Activated CD4-positive, alpha-beta T cell treated with anti-CD3 and anti-CD28 coated beads for 36 hours (primary cell): ENCODE measurements at regions of chr5 and their contacts with region 1.

Region 1: GRCh38 chr5:122774861-122775549 is at the start of gene SNX2:
- DNase-seq: peak; percentile 95
- ATAC-seq: peak; percentile 94
- H3K4me3 Mint-ChIP-seq: peak within 1 kb of the TSS; percentile 94
- H3K27ac Mint-ChIP-seq: peak within 1 kb of the TSS; percentile 91
- H3K4me1 Mint-ChIP-seq: peaks cover 30% of the 10 kb centered on the region
- H3K27me3 Mint-ChIP-seq: peaks cover under 1% of the 10 kb centered on the region
- total RNA-seq, gene SNX2: 50.2 to 56.0 TPM

Region 2: GRCh38 chr5:122805481-122805880 is 30.5 kb after region 1 on chr5:
- CTCF ChIA-PET with region 1: no interaction called
- POLR2A ChIA-PET with region 1: no interaction called
- intact Hi-C with region 1: no loop called
- DNase-seq: no peak
- ATAC-seq: no peak
- H3K4me3 Mint-ChIP-seq: no peak overlapping the region
- H3K27ac Mint-ChIP-seq: no peak overlapping the region
- H3K4me1 Mint-ChIP-seq: no peaks in the 10 kb centered on the region
- H3K27me3 Mint-ChIP-seq: no peaks in the 10 kb centered on the region

Region 3: DNA sequence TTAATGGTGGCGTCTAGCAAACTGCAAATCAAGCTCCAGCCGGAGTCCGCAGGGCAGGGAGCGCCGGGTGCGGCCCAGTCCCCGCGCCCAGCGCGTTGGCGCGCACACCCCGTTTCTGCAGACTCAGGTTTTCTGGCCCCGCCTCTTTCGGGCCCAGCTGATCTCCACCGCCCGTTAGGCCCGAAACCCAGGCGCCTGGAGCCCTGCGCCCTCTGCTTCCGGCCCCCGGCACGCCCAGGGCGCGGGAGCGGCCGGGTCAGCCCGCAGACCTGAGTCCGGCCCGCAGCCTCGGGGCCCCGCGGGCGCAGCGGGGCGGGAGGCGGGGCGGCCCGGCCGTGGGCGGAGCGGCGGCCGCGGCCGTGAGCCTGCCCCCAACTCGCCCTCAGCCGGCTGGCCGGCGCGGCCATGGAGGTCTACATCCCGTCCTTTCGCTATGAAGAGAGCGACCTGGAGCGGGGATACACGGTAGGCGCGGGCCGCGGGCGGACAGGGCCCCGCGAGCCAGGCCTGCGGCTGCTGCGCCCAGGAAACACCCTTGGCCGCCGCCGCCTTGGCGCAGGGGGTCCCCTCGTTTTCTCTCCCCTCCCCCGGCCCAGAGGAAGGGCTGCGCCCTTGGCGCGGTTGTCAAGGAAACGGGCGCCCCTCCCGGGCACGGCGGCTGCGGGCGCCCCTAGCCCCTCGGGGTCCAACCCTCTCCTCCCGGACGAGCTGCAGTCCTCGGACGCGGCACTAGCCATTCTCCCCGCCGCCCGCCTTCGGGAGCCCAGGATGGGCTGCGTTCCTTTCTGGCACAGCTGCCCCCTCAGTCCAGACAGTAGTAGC is 70.4 kb after region 1 on chr5 and contains the start of gene SNX24:
- CTCF ChIA-PET with region 1: no interaction called
- POLR2A ChIA-PET with region 1: no interaction called
- intact Hi-C with region 1: loop called in 1 of 2 experiments (anchors 1 kb)
- DNase-seq: peak; percentile 83
- ATAC-seq: peak; percentile 88
- H3K4me3 Mint-ChIP-seq: peak within 1 kb of the TSS; percentile 78
- H3K27ac Mint-ChIP-seq: peak within 1 kb of the TSS; percentile 78
- H3K4me1 Mint-ChIP-seq: peaks cover 26% of the 10 kb centered on the region
- H3K27me3 Mint-ChIP-seq: peaks cover 3% of the 10 kb centered on the region
- total RNA-seq, gene SNX24: 4.0 to 4.9 TPM